ENCODE measurements at regions of chr15 and their contacts with region 1.

Region 1: DNA sequence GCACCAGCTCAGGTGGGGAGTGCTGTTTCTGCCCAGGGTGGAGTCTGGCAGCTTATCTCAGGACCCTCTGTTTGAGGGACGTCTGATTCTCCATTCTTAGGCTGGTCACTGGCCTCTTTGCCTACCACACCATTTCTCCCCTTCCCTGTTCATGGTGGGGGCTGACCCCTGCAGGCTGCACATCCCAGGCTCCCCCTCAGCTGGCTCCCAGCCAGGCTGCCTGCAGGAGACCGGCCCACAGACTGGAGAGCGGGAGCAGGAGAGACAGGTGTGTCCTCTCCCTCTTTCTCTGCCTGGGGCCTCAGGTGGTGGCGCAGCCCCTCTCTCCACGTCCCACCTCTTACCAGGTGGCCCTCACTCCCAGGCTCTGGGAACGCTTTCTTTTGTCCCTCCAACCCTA is 60.8 kb downstream of the RAB11A start:
- DNase-seq: no peak
- ATAC-seq: no peak
- H3K4me3 Mint-ChIP-seq: no peak overlapping the region
- H3K27ac Mint-ChIP-seq: no peak overlapping the region
- H3K4me1 Mint-ChIP-seq: peaks cover 4% of the 10 kb centered on the region; the same call in 1 of the 2 replicates
- H3K27me3 Mint-ChIP-seq: no peaks in the 10 kb centered on the region; the same call in 1 of the 2 replicates
- CTCF ChIP-seq: no peak

Region 2: DNA sequence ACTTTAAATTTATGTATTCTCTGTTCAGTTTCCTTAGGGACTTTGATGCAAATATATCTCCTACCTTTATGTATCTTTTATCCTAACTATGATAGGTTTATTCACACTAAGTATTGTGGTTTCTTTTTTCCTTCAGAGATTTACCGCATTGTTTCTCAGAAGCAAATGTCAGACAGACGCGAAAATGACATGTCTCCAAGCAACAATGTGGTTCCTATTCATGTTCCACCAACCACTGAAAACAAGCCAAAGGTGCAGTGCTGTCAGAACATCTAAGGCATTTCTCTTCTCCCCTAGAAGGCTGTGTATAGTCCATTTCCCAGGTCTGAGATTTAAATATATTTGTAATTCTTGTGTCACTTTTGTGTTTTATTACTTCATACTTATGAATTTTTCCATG is 42.6 kb before region 1 on chr15:
- CTCF ChIA-PET with region 1: no interaction called
- POLR2A ChIA-PET with region 1: no interaction called
- DNase-seq: no peak
- ATAC-seq: no peak
- H3K4me3 Mint-ChIP-seq: no peak overlapping the region
- H3K27ac Mint-ChIP-seq: no peak overlapping the region
- H3K4me1 Mint-ChIP-seq: peaks cover 14% of the 10 kb centered on the region
- H3K27me3 Mint-ChIP-seq: no peaks in the 10 kb centered on the region
- CTCF ChIP-seq: no peak

Region 3: GRCh38 chr15:65945616-65946015 is 15.5 kb after region 1 on chr15:
- CTCF ChIA-PET with region 1: interaction called, 11 read pairs
- POLR2A ChIA-PET with region 1: no interaction called
- DNase-seq: peak; percentile 45
- ATAC-seq: peak; percentile 80
- H3K4me3 Mint-ChIP-seq: no peak overlapping the region
- H3K27ac Mint-ChIP-seq: no peak overlapping the region
- H3K4me1 Mint-ChIP-seq: no peaks in the 10 kb centered on the region
- H3K27me3 Mint-ChIP-seq: no peaks in the 10 kb centered on the region
- CTCF ChIP-seq: no peak

Region 4: GRCh38 chr15:65957451-65957850 is 27.3 kb after region 1 on chr15:
- CTCF ChIA-PET with region 1: no interaction called
- POLR2A ChIA-PET with region 1: no interaction called
- DNase-seq: no peak
- ATAC-seq: no peak
- H3K4me3 Mint-ChIP-seq: no peak overlapping the region
- H3K27ac Mint-ChIP-seq: no peak overlapping the region
- H3K4me1 Mint-ChIP-seq: peaks cover 45% of the 10 kb centered on the region
- H3K27me3 Mint-ChIP-seq: no peaks in the 10 kb centered on the region; the same call in 1 of the 2 replicates
- CTCF ChIP-seq: no peak

Region 5: DNA sequence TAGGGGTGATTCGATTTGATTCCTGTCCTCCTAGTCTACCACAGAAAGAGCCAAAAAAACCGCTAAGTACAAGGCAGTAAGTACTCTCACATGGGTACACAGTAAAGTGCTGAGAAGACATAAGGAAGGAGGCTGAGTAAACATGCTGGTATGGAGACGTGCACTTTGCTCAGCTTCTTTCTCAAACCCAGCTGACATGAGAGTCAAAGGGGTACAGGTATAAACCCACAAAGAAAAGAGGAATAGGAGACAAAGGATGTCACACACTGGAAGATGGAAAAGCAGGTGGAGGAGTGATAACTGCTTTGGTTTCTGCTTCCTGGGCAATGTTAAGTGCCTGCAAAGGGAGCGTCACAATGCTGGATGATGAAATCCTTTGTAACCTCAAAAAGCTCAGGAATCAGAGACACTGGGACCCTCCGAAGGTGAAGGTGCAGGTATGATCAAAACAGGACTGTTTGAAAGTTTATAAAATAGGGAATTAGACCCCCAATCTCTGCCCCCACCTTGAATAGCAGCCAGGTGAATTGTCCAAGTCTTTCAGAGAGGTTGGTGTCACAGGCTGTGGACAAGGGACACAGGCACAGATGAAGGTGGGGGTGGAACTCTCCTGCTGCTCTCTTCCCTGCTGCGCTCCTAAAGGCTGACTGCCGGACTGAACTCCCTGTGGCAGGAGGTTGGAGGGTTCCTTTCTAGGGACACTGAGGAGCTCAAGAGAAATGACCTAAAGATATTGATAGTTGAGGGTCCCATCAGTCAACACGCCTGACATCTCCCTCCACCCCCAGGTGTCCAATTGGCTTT is 41.0 kb after region 1 on chr15:
- CTCF ChIA-PET with region 1: no interaction called
- POLR2A ChIA-PET with region 1: no interaction called
- DNase-seq: no peak
- ATAC-seq: no peak
- H3K4me3 Mint-ChIP-seq: no peak overlapping the region
- H3K27ac Mint-ChIP-seq: no peak overlapping the region
- H3K4me1 Mint-ChIP-seq: peaks cover 11% of the 10 kb centered on the region
- H3K27me3 Mint-ChIP-seq: no peaks in the 10 kb centered on the region
- CTCF ChIP-seq: no peak

Region 6: GRCh38 chr15:66163553-66163952 is 233.4 kb after region 1 on chr15:
- CTCF ChIA-PET with region 1: no interaction called
- POLR2A ChIA-PET with region 1: no interaction called
- DNase-seq: no peak
- ATAC-seq: no peak
- H3K4me3 Mint-ChIP-seq: no peak overlapping the region
- H3K27ac Mint-ChIP-seq: no peak overlapping the region
- H3K4me1 Mint-ChIP-seq: peaks cover 6% of the 10 kb centered on the region
- H3K27me3 Mint-ChIP-seq: no peaks in the 10 kb centered on the region
- CTCF ChIP-seq: no peak

Measured in WTC11 (cell line).